Endothelial cell of umbilical vein (primary cell): ENCODE measurements at regions of chr17 and their contacts with region 1.

Region 1: GRCh38 chr17:59155439-59156182 is at the start of gene PRR11:
- DNase-seq: peak; percentile 100
- H3K4me3 ChIP-seq: peak within 1 kb of the TSS; percentile 67 to 97 (median 93)
- H3K27ac ChIP-seq: peak within 1 kb of the TSS; percentile 79
- H3K4me1 ChIP-seq: peaks cover 51% of the 10 kb centered on the region
- H3K27me3 ChIP-seq: no peaks in the 10 kb centered on the region
- CTCF ChIP-seq: no peak
- POLR2A ChIP-seq: no peak
- total RNA-seq, gene PRR11: 82.1 and 86.3 TPM in 2 replicates

Region 2: DNA sequence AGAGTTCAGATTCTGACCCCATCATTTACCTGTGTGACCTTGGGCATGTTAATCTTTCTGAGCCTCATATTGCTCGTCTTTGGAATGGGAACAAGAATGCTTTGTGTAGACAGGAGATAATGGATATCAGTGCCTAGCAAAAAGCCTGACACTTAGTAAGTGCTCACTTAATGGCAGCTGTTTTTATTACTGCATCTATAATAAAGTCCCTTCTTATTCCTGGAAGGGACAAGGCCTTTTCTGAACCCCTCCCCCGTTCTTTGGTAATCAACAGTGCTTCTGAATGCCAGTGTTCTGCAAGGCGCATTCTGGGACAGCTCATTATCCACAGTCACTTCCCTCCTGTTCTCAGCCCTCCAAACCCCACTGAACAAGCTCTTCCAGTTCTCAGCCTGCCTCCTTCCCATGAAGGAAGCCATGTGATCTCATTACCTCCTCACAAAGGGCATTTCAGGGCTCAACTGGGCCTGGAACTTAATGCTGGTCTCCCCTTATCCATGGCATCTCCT is 778.5 kb before region 1 on chr17:
- CTCF ChIA-PET with region 1: no interaction called
- POLR2A ChIA-PET with region 1: no interaction called
- dilution Hi-C with region 1: no loop called
- intact Hi-C with region 1: no loop called
- DNase-seq: no peak
- H3K4me3 ChIP-seq: no peak overlapping the region
- H3K27ac ChIP-seq: no peak overlapping the region
- H3K4me1 ChIP-seq: no peaks in the 10 kb centered on the region
- H3K27me3 ChIP-seq: peaks cover 8 to 10% of the 10 kb centered on the region in 2 experiments
- CTCF ChIP-seq: no peak
- POLR2A ChIP-seq: no peak

Region 3: DNA sequence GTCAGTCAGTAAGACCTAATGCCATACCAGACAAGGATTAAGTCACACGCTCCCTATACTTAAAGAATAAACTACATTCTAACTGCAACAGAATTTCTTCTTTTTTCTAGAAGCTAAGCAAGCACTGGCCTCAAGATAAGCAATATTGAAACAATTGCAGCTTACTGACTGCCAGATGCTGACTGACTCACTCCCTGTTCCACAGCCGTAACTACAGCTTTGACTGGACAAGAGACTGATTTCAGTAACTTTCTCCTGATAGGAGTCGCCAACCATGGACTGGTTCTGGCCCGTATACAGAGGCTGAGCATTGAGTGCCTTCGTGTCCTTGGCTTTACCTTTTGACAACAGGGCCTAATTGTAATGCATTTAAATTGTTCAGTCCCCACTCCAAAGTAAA is 116.9 kb before region 1 on chr17:
- CTCF ChIA-PET with region 1: no interaction called
- POLR2A ChIA-PET with region 1: no interaction called
- dilution Hi-C with region 1: no loop called
- intact Hi-C with region 1: no loop called
- DNase-seq: no peak
- H3K4me3 ChIP-seq: no peak overlapping the region
- H3K27ac ChIP-seq: no peak overlapping the region
- H3K4me1 ChIP-seq: no peaks in the 10 kb centered on the region
- H3K27me3 ChIP-seq: no peaks in the 10 kb centered on the region
- CTCF ChIP-seq: no peak
- POLR2A ChIP-seq: no peak

Region 4: DNA sequence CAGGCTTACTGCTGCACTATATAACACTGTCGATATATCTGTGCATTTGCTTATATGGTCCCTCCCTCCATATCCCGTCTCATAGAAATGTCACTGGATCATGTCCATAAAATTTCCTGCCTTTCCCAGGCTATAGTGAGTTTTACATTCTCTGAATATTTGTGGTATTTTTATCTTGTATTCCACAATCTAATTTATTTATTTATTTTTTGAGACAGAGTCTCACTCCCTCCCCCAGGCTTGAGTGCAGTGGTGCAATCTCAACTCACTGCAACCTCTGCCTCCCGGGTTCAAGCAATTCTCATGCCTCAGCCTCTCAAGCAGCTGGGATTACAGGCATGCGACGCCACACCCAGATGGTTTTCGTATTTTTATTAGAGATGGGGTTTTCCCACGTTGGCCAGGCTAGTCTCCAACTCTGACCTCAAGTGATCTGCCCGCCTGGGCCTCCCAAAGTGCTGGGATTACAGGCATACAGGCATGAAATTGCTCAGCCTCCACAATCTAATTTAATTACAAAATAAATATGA is 61.8 kb before region 1 on chr17:
- CTCF ChIA-PET with region 1: no interaction called
- POLR2A ChIA-PET with region 1: no interaction called
- dilution Hi-C with region 1: no loop called
- intact Hi-C with region 1: loop called (anchors 5 kb)
- DNase-seq: peak; percentile 93
- H3K4me3 ChIP-seq: peak overlapping the region in 1 of 3 experiments; percentile 25
- H3K27ac ChIP-seq: peak overlapping the region; percentile 83
- H3K4me1 ChIP-seq: peaks cover 27% of the 10 kb centered on the region
- H3K27me3 ChIP-seq: no peaks in the 10 kb centered on the region
- CTCF ChIP-seq: no peak
- POLR2A ChIP-seq: no peak

Region 5: DNA sequence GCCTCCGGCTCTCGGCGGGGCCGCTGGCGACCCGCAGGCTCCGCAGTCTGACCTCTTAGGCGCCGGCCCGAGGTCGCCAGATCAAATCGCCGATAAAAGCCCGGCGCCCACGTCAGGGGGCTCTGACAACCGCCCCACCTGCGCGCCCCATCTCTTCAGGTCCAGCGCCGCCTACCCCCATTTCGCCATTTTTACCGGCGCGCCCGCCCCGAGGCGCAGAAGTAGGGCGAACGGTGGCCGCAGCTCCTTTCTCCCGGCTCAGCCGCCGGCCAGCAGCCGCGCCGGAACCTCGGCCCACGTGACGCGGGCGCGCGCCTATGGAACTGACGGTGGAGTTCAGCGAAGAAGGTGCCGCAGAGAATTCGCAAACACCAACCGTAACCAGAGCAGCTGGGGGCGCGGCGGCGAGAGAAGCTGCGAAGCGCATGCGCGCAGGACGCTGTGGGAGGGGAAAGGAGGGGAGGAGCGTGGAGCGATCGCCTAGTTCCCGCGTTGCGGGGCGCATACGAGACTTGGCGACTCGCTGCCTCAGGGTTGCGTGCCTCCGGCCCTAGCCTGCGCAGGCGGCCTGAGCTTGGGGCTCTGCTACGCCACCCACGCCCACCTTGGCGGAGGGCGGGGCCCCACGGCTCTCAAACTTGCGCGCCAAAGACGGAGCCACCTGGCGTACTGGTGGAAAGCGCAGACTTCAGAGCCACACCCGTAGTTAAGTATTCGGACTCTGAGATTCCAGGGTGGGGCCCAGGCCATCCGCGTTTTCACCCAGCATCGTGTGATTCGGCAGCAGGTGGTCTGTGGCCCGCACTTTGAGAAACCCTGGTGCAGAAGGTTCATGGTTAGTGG is 48.9 kb before region 1 on chr17 and contains the start of gene TRIM37:
- CTCF ChIA-PET with region 1: interaction called, 3 read pairs
- POLR2A ChIA-PET with region 1: interaction called, 5 read pairs
- dilution Hi-C with region 1: no loop called
- intact Hi-C with region 1: loop called (anchors 1 kb)
- DNase-seq: peak; percentile 100
- H3K4me3 ChIP-seq: peak within 1 kb of the TSS; percentile 29 to 91 (median 77)
- H3K27ac ChIP-seq: peak within 1 kb of the TSS; percentile 63
- H3K4me1 ChIP-seq: peaks cover 18% of the 10 kb centered on the region
- H3K27me3 ChIP-seq: no peaks in the 10 kb centered on the region
- CTCF ChIP-seq: no peak
- POLR2A ChIP-seq: peak; percentile 72
- total RNA-seq, gene TRIM37: 37.1 and 41.9 TPM in 2 replicates

Region 6: DNA sequence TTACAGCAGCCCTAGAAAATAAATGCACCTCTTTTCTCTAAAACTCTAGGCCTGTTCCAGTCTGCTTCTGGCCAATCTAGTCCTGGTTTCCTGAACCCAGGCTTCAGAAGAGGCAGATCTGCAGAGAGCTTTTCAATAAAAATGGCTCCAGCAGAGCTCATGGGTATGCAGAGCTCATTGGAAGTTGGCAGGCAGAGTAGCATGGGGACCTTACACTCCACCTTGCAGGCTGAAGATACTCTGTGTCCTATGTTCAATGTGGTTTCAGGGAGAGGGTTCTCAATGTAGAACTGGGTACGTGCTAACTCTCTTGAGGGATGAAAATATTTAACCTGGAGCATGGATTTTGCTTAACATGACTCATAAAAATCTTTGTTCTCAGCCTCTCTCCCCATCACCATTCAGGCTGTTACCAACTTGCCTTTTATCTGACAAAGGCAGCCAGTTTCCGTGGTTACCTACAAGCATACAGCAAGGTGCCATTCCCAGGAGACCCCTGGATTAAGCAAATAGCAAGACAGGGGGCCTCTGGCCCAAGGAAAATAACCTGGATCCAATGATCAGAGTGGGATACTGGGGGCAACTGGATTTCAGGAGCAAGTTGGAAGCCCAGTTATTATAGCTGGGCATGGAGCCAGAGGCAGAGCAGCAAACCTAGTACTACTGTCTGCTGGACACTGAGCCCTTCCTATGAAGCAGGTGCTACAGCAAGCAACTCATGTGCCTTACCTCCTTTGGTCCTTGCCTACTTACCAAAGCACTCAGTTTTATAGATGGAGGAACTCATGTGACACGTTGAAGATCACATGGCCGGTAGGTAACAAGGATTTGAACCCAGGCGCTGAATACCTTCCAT is 311.6 kb after region 1 on chr17:
- CTCF ChIA-PET with region 1: no interaction called
- POLR2A ChIA-PET with region 1: no interaction called
- dilution Hi-C with region 1: no loop called
- intact Hi-C with region 1: no loop called
- DNase-seq: no peak
- H3K4me3 ChIP-seq: no peak overlapping the region
- H3K27ac ChIP-seq: no peak overlapping the region
- H3K4me1 ChIP-seq: no peaks in the 10 kb centered on the region
- H3K27me3 ChIP-seq: no peaks in the 10 kb centered on the region
- CTCF ChIP-seq: no peak
- POLR2A ChIP-seq: no peak

Region 7: GRCh38 chr17:59707114-59707970 is 551.7 kb after region 1 on chr17 and contains the starts of genes PTRH2 and VMP1:
- CTCF ChIA-PET with region 1: no interaction called
- POLR2A ChIA-PET with region 1: no interaction called
- dilution Hi-C with region 1: no loop called
- intact Hi-C with region 1: loop called (anchors 5 kb)
- DNase-seq: peak; percentile 100
- H3K4me3 ChIP-seq: peak within 1 kb of the TSS; percentile 59 to 90 (median 89)
- H3K27ac ChIP-seq: peak within 1 kb of the TSS; percentile 97
- H3K4me1 ChIP-seq: peaks cover 26% of the 10 kb centered on the region
- H3K27me3 ChIP-seq: no peaks in the 10 kb centered on the region
- CTCF ChIP-seq: no peak
- POLR2A ChIP-seq: peak; percentile 94
- total RNA-seq, gene PTRH2: 40.1 and 41.2 TPM in 2 replicates
- total RNA-seq, gene VMP1: 270 and 321 TPM in 2 replicates